ENCODE measurements at regions of chr5 and their contacts with region 1.

Region 1: DNA sequence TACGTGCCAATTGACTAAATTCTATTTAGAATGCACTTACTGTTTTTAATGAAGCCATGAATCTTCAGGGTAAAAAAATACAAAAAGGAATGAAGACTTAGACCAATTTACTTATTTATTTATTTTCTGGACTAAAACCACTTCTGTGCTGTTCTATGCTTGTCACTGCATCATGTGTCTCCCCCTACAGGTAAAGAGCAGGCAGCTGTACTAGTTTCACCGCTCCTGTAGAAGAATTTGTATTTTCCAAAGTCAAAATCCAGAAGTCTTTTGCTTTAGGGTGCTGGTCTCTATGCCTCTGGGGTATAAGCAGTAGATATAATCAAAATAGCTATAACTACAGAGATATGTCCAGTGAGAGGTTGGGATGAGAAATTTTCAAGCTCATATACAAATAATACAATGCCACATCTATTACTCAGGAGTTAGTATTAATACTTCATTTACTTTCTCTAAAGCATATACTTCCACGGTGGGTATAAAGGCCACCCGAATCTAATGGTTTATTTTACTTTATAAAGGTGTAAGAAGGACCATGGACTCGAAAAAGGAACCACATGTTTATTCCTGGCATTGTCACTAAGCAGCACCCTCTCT is 591.5 kb downstream of the RAB3C start:
- DNase-seq: peak; percentile 64
- H3K4me3 ChIP-seq: no peak overlapping the region
- H3K27ac ChIP-seq: no peak overlapping the region
- H3K4me1 ChIP-seq: no peaks in the 10 kb centered on the region
- H3K27me3 ChIP-seq: no peaks in the 10 kb centered on the region
- CTCF ChIP-seq: peak; percentile 63 to 68
- POLR2A ChIP-seq: no peak

Region 2: DNA sequence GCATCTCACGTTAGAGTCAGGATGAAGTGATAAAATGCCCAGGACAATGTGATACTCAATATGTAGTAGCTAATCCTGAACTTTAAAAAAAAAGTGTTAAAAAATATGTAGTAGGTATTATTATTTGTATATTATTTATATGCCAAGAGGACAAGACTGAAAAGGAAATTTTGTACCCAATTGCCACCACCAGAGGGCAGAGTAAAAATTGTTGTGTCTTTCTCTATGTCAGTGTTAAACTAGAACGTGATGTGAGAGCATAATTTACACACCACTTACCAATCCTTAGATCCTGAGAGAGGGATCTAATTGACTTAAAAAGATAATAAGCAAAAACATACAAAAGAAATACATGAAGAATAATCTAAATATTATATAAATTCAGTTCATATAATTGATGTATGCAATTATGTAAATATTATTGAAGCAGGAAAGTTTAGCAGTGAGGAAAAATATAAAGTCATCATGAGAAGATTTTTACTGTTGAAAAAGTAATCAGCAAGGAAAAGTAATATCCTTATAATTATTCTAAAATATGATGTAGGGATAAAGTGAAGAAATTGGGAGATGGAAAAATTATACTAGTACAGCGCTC is 302.6 kb before region 1 on chr5:
- CTCF ChIA-PET with region 1: interaction called, 10 read pairs
- POLR2A ChIA-PET with region 1: no interaction called
- dilution Hi-C with region 1: no loop called
- intact Hi-C with region 1: no loop called
- DNase-seq: peak; percentile 56
- H3K4me3 ChIP-seq: no peak overlapping the region
- H3K27ac ChIP-seq: no peak overlapping the region
- H3K4me1 ChIP-seq: no peaks in the 10 kb centered on the region
- H3K27me3 ChIP-seq: peaks cover 20 to 45% of the 10 kb centered on the region in 2 experiments
- CTCF ChIP-seq: peak; percentile 41 to 54
- POLR2A ChIP-seq: no peak

Region 3: DNA sequence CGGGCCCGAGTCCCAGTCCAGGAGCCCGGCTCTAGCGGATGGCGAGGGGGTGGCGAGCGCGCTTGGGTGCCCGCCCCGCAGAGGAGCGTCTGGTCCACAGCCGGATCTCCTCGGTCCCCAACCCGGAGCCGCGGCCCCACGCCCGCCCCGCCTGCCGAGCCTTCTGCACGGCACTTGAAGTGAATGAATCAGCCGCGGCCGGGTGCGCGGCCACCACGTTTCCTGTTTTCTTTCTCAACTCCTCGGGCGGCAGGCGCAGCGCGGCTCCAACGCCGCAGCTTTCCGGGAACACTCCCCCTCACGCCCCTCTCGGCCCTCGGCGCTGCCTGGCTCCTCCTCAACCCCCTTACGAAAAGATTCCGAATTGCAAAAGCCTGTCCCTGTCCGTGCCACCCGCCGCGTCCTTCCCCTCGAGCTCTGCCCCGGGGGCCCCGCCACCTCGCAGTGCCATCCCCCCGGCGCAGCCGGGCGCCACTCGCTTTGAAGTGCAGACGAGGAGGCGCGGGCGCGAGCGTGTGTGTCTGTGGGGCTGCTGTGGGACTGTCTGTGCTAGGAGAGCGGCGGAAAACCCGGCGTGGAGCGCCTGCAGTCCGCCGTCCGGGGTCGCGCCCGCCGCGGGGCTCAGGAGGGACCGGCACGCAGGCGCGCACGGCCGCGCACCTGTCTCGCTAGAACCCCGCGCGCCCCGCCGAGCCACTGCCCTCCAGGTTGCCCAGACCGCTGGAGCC is 134.9 kb before region 1 on chr5:
- CTCF ChIA-PET with region 1: interaction called, 68 read pairs
- POLR2A ChIA-PET with region 1: no interaction called
- dilution Hi-C with region 1: no loop called
- intact Hi-C with region 1: loop called (anchors 1 kb)
- DNase-seq: peak; percentile 77
- H3K4me3 ChIP-seq: peak overlapping the region; percentile 57 to 81 (median 60)
- H3K27ac ChIP-seq: peak overlapping the region; percentile 14
- H3K4me1 ChIP-seq: peaks cover 40% of the 10 kb centered on the region
- H3K27me3 ChIP-seq: no peaks in the 10 kb centered on the region
- CTCF ChIP-seq: no peak
- POLR2A ChIP-seq: no peak

Region 4: GRCh38 chr5:59164041-59164830 is 10.1 kb before region 1 on chr5:
- CTCF ChIA-PET with region 1: interaction called, 16 read pairs
- POLR2A ChIA-PET with region 1: no interaction called
- dilution Hi-C with region 1: no loop called
- intact Hi-C with region 1: no loop called
- DNase-seq: peak; percentile 9
- H3K4me3 ChIP-seq: no peak overlapping the region
- H3K27ac ChIP-seq: no peak overlapping the region
- H3K4me1 ChIP-seq: no peaks in the 10 kb centered on the region
- H3K27me3 ChIP-seq: no peaks in the 10 kb centered on the region
- CTCF ChIP-seq: no peak
- POLR2A ChIP-seq: no peak